A549 (cell line): ENCODE measurements at regions of chr22 and their contacts with region 1.

Region 1: GRCh38 chr22:37457093-37457893 is 28.9 kb downstream of the MFNG start:
- DNase-seq: peak; percentile 67 to 70
- ATAC-seq: peak; percentile 81 to 90
- H3K4me3 ChIP-seq: no peak overlapping the region
- H3K27ac ChIP-seq: peak overlapping the region; percentile 91 to 99
- H3K4me1 ChIP-seq: peaks cover 33% of the 10 kb centered on the region
- CTCF ChIP-seq: peak; percentile 87
- EP300 ChIP-seq: no peak
- POLR2A ChIP-seq: no peak
- RAD21 ChIP-seq: peak; percentile 96 to 99

Region 2: DNA sequence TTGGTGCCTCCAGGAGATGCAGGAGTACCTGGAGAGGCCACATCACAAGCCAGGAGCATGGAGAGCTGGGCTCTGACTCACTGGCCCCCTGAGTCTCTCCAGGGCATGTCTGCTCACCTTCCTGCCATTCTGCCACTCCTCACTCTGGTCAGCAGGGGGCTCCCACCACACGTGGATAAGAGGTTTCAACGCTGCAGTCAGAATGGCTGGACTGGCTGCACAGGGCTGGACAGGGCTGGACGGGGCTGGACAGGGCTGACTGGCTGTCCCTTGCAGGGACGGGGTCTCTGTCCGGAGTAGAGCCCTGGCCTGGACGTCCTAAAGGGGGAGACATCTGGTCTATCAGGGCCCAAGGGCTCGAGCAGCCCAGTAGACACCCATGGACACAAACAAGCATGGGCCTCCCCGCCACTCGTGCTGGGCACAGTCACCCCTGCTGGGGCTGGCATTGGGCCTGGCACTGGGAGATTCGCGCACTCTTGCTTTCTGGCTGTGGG is 140.4 kb before region 1 on chr22:
- CTCF ChIA-PET with region 1: interaction called, 134 read pairs
- POLR2A ChIA-PET with region 1: no interaction called
- DNase-seq: peak; percentile 84 to 87
- ATAC-seq: peak; percentile 79 to 95
- H3K4me3 ChIP-seq: no peak overlapping the region
- H3K27ac ChIP-seq: peak overlapping the region; percentile 33 to 85
- H3K4me1 ChIP-seq: peaks cover 55% of the 10 kb centered on the region
- CTCF ChIP-seq: peak; percentile 71
- EP300 ChIP-seq: no peak
- POLR2A ChIP-seq: no peak
- RAD21 ChIP-seq: peak; percentile 96

Region 3: GRCh38 chr22:37330200-37331033 is 126.9 kb before region 1 on chr22:
- CTCF ChIA-PET with region 1: interaction called, 26 read pairs
- POLR2A ChIA-PET with region 1: no interaction called
- DNase-seq: peak; percentile 79 to 87
- ATAC-seq: peak; percentile 62 to 77
- H3K4me3 ChIP-seq: no peak overlapping the region
- H3K27ac ChIP-seq: peak overlapping the region; percentile 76 to 94
- H3K4me1 ChIP-seq: peaks cover 71% of the 10 kb centered on the region
- CTCF ChIP-seq: peak; percentile 24; the same call in 2 of the 3 replicates
- EP300 ChIP-seq: no peak
- POLR2A ChIP-seq: no peak
- RAD21 ChIP-seq: no peak

Region 4: DNA sequence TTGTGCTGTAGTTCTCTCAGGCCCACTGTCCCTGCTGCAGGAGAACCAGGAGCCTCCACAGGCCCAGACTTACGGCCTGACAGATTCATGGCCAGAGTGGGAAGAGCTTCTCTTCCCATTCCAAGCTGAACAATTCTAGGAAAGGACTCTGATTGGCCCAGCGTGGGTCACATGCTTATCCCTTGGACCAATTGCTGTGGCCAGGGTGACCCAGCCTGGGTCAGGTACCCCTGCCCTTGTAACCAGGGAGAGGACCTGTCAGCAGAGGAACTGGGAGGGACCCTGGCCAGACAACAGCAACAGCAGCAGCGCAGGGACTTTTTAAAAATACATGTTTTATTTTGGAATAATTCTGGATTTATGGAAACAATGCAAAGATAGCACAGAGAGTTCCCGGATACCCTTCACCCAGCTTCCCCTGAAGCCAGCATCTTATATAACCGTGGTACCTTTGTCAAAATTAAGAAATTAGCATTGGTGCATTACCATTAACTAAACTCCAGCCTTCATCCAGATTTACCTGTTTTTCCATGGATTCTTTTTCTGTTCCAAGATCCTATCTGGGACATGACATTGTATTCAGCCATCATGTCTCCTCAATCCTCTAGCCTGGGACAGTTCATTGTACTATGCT is 21.2 kb before region 1 on chr22:
- CTCF ChIA-PET with region 1: interaction called, 114 read pairs
- POLR2A ChIA-PET with region 1: no interaction called
- DNase-seq: no peak
- ATAC-seq: no peak
- H3K4me3 ChIP-seq: no peak overlapping the region
- H3K27ac ChIP-seq: peak overlapping the region in 1 of 2 experiments; percentile 97; a peak in 2 of 6 replicates
- H3K4me1 ChIP-seq: peaks cover 25% of the 10 kb centered on the region
- CTCF ChIP-seq: no peak
- EP300 ChIP-seq: no peak
- POLR2A ChIP-seq: no peak
- RAD21 ChIP-seq: no peak

Region 5: GRCh38 chr22:37472418-37473006 is 15.2 kb after region 1 on chr22:
- CTCF ChIA-PET with region 1: interaction called, 27 read pairs
- POLR2A ChIA-PET with region 1: no interaction called
- DNase-seq: peak; percentile 55 to 80
- ATAC-seq: peak; percentile 53 to 84; a peak in 4 of 6 replicates
- H3K4me3 ChIP-seq: no peak overlapping the region
- H3K27ac ChIP-seq: no peak overlapping the region
- H3K4me1 ChIP-seq: no peaks in the 10 kb centered on the region
- CTCF ChIP-seq: peak; percentile 55
- EP300 ChIP-seq: no peak
- POLR2A ChIP-seq: no peak
- RAD21 ChIP-seq: peak; percentile 60 to 63

Region 6: DNA sequence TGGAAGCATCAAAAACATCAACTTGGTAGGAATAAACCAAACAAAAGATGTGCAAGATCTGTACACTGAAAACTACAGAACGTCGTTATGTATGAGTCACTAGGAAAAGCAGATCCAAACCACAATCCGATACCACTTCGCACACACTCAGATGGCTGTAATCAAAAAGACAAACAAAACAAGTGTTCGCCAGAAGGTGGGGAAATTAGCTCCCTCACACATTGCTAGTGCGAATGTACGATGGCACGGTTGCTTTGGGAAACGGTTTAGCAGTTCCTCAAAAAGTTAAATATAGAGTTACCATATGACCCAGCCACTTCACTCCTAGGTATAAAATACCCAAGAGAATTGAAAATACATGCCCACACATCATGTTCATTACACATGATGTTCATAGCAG is 76.7 kb after region 1 on chr22:
- CTCF ChIA-PET with region 1: no interaction called
- POLR2A ChIA-PET with region 1: no interaction called
- DNase-seq: no peak
- ATAC-seq: no peak
- H3K4me3 ChIP-seq: no peak overlapping the region
- H3K27ac ChIP-seq: no peak overlapping the region
- H3K4me1 ChIP-seq: peaks cover 16% of the 10 kb centered on the region
- CTCF ChIP-seq: no peak
- EP300 ChIP-seq: no peak
- POLR2A ChIP-seq: no peak
- RAD21 ChIP-seq: no peak